HepG2 (cell line): ENCODE measurements at regions of chr10 and their contacts with region 1.

Region 1: DNA sequence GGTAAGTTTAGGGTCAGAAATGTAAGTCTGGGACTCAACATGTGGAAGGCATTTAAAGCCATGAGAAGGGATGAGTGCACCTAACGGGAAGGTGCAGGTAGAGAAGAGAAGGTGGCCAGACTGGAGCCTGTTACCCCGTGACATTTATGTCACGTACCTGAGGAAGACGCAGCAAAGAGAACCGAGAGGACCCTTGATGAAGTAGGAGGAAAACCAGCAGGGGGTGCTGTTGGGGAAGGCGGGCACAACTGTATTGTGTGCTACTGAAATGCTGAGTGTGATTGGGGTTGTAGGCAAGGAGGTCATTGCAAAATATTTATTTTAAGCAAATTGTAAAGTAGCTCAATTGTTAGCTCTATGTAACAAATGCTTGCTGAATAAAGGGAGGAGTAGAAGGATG is 338.2 kb upstream of the PRKCQ start:
- DNase-seq: no peak
- ATAC-seq: peak; percentile 47; the same call in 1 of the 3 replicates
- H3K4me3 ChIP-seq: no peak overlapping the region
- H3K27ac ChIP-seq: no peak overlapping the region
- H3K4me1 ChIP-seq: no peaks in the 10 kb centered on the region
- H3K27me3 ChIP-seq: no peaks in the 10 kb centered on the region; a peak in 1 of 5 replicates
- CTCF ChIP-seq: peak; percentile 38
- EP300 ChIP-seq: no peak
- POLR2A ChIP-seq: no peak
- RAD21 ChIP-seq: no peak

Region 2: GRCh38 chr10:7410862-7411670 is 492.8 kb after region 1 on chr10 and contains the start of gene SFMBT2:
- CTCF ChIA-PET with region 1: no interaction called
- POLR2A ChIA-PET with region 1: no interaction called
- in situ Hi-C with region 1: loop called (anchors 10 kb)
- intact Hi-C with region 1: no loop called
- DNase-seq: no peak
- ATAC-seq: peak; percentile 75
- H3K4me3 ChIP-seq: peak within 1 kb of the TSS; percentile 12 to 46 (median 29); a peak in 2 of 6 replicates
- H3K27ac ChIP-seq: no peak within 1 kb of the TSS
- H3K4me1 ChIP-seq: no peaks in the 10 kb centered on the region
- H3K27me3 ChIP-seq: peaks cover 4 to 31% of the 10 kb centered on the region in 2 experiments; a peak in 4 of 5 replicates
- CTCF ChIP-seq: no peak
- EP300 ChIP-seq: no peak
- POLR2A ChIP-seq: no peak
- RAD21 ChIP-seq: no peak
- total RNA-seq, gene SFMBT2: 0.02 and 0.04 TPM in 2 replicates

Region 3: GRCh38 chr10:7488418-7488829 is 570.1 kb after region 1 on chr10:
- CTCF ChIA-PET with region 1: no interaction called
- POLR2A ChIA-PET with region 1: no interaction called
- in situ Hi-C with region 1: no loop called
- intact Hi-C with region 1: no loop called
- DNase-seq: peak; percentile 52
- ATAC-seq: no peak
- H3K4me3 ChIP-seq: no peak overlapping the region
- H3K27ac ChIP-seq: no peak overlapping the region
- H3K4me1 ChIP-seq: peaks cover 8% of the 10 kb centered on the region
- H3K27me3 ChIP-seq: peaks cover 0 to 20% of the 10 kb centered on the region in 2 experiments; a peak in 1 of 5 replicates
- CTCF ChIP-seq: no peak
- EP300 ChIP-seq: no peak
- POLR2A ChIP-seq: no peak
- RAD21 ChIP-seq: no peak